ENCODE measurements at regions of chr2 and their contacts with region 1.

Region 1: DNA sequence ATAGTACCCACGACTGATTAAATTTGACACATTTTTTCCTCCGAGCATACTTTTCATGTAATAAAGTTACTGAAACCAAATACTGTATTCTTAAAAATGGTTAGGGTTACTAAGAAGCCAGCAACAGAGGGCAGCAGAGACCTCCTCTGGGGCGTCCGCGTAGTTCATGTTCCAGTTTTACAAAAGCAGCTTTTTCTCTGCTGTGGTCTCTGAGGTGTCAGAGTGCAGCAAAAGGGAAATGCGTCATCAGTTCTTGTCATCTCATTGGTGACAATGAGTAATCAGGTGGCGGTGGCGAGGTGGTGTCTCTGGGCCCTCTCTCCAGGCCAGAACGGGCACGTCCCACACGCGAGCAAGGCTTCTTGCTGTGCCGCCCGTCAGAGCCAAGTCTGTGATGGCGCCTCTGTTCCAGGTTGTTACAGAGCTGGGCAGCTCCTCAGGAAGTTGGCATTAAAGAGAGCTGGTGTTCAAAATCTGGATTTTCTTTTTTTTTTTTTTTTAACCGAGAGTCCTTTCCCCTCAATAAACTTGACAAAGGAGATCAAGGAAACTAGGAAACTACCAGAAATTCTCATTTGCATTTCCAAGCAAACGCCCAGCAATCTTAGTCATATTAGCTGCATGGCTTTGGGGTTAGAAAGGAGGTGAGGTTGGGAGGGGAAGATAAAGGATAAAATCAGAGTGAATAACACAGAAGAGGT is 98.6 kb upstream of the BZW1 start:
- DNase-seq: peak; percentile 84 to 98 (median 88)
- ATAC-seq: peak; percentile 96
- H3K4me3 ChIP-seq: peak overlapping the region; percentile 33
- H3K4me3 Mint-ChIP-seq: peak overlapping the region; percentile 77
- H3K27ac ChIP-seq: peak overlapping the region; percentile 81 to 95
- H3K27ac Mint-ChIP-seq: peak overlapping the region; percentile 99
- H3K4me1 ChIP-seq: peaks cover 9% of the 10 kb centered on the region
- H3K4me1 Mint-ChIP-seq: peaks cover 13% of the 10 kb centered on the region
- H3K27me3 ChIP-seq: no peaks in the 10 kb centered on the region
- H3K27me3 Mint-ChIP-seq: no peaks in the 10 kb centered on the region
- CTCF ChIP-seq: peak; percentile 89

Region 2: GRCh38 chr2:200509612-200510433 is 203.3 kb before region 1 on chr2 and contains the start of gene KCTD18:
- CTCF ChIA-PET with region 1: interaction called, 4 read pairs
- POLR2A ChIA-PET with region 1: interaction called, 3 read pairs
- intact Hi-C with region 1: loop called in 1 of 2 experiments (anchors 5 kb)
- DNase-seq: peak; percentile 81 to 94 (median 92)
- ATAC-seq: peak; percentile 99
- H3K4me3 ChIP-seq: peak within 1 kb of the TSS; percentile 84
- H3K4me3 Mint-ChIP-seq: peak within 1 kb of the TSS; percentile 95
- H3K27ac ChIP-seq: peak within 1 kb of the TSS; percentile 54
- H3K27ac Mint-ChIP-seq: peak within 1 kb of the TSS; percentile 91
- H3K4me1 ChIP-seq: peaks cover 27% of the 10 kb centered on the region
- H3K4me1 Mint-ChIP-seq: peaks cover 46% of the 10 kb centered on the region
- H3K27me3 ChIP-seq: no peaks in the 10 kb centered on the region
- H3K27me3 Mint-ChIP-seq: no peaks in the 10 kb centered on the region
- CTCF ChIP-seq: peak; percentile 72
- total RNA-seq, gene KCTD18: 18.9 to 19.8 TPM

Region 3: GRCh38 chr2:200735061-200735460 is 21.9 kb after region 1 on chr2:
- CTCF ChIA-PET with region 1: interaction called, 10 read pairs
- POLR2A ChIA-PET with region 1: interaction called, 6 read pairs
- intact Hi-C with region 1: loop called (anchors 1 to 2 kb)
- DNase-seq: peak in 1 of 14 experiments; percentile 10
- ATAC-seq: no peak
- H3K4me3 ChIP-seq: no peak overlapping the region
- H3K4me3 Mint-ChIP-seq: no peak overlapping the region
- H3K27ac ChIP-seq: no peak overlapping the region
- H3K27ac Mint-ChIP-seq: no peak overlapping the region
- H3K4me1 ChIP-seq: no peaks in the 10 kb centered on the region
- H3K4me1 Mint-ChIP-seq: no peaks in the 10 kb centered on the region
- H3K27me3 ChIP-seq: peaks cover 0 to 4% of the 10 kb centered on the region in 2 experiments
- H3K27me3 Mint-ChIP-seq: peaks cover 27% of the 10 kb centered on the region
- CTCF ChIP-seq: no peak

Region 4: GRCh38 chr2:200888704-200889625 is 175.8 kb after region 1 on chr2 and contains the starts of genes NIF3L1 and PPIL3:
- CTCF ChIA-PET with region 1: interaction called, 7 read pairs
- POLR2A ChIA-PET with region 1: interaction called, 27 read pairs
- intact Hi-C with region 1: loop called (anchors 2 kb)
- DNase-seq: peak; percentile 93 to 99 (median 95)
- ATAC-seq: peak; percentile 67
- H3K4me3 ChIP-seq: peak within 1 kb of the TSS; percentile 64
- H3K4me3 Mint-ChIP-seq: peak within 1 kb of the TSS; percentile 94
- H3K27ac ChIP-seq: peak within 1 kb of the TSS; percentile 92 to 94
- H3K27ac Mint-ChIP-seq: peak within 1 kb of the TSS; percentile 99
- H3K4me1 ChIP-seq: peaks cover 36% of the 10 kb centered on the region
- H3K4me1 Mint-ChIP-seq: peaks cover 42% of the 10 kb centered on the region
- H3K27me3 ChIP-seq: no peaks in the 10 kb centered on the region
- H3K27me3 Mint-ChIP-seq: no peaks in the 10 kb centered on the region
- CTCF ChIP-seq: no peak
- total RNA-seq, gene NIF3L1: 6.1 to 6.7 TPM
- total RNA-seq, gene PPIL3: 23.1 to 29.8 TPM

Region 5: GRCh38 chr2:200963124-200963917 is 250.2 kb after region 1 on chr2 and contains the start of gene ORC2:
- CTCF ChIA-PET with region 1: no interaction called
- POLR2A ChIA-PET with region 1: interaction called, 3 read pairs
- intact Hi-C with region 1: loop called in 1 of 2 experiments (anchors 10 kb)
- DNase-seq: peak; percentile 87 to 96 (median 90)
- ATAC-seq: peak; percentile 95
- H3K4me3 ChIP-seq: peak within 1 kb of the TSS; percentile 98
- H3K4me3 Mint-ChIP-seq: peak within 1 kb of the TSS; percentile 99
- H3K27ac ChIP-seq: peak within 1 kb of the TSS; percentile 89 to 92
- H3K27ac Mint-ChIP-seq: peak within 1 kb of the TSS; percentile 100
- H3K4me1 ChIP-seq: peaks cover 25% of the 10 kb centered on the region
- H3K4me1 Mint-ChIP-seq: peaks cover 73% of the 10 kb centered on the region
- H3K27me3 ChIP-seq: no peaks in the 10 kb centered on the region
- H3K27me3 Mint-ChIP-seq: no peaks in the 10 kb centered on the region
- CTCF ChIP-seq: peak; percentile 74
- total RNA-seq, gene ORC2: 25.0 to 26.6 TPM

Region 6: GRCh38 chr2:201171259-201171814 is 458.2 kb after region 1 on chr2:
- CTCF ChIA-PET with region 1: no interaction called
- POLR2A ChIA-PET with region 1: no interaction called
- intact Hi-C with region 1: loop called (anchors 5 kb)
- DNase-seq: no peak
- ATAC-seq: no peak
- H3K4me3 ChIP-seq: no peak overlapping the region
- H3K4me3 Mint-ChIP-seq: no peak overlapping the region
- H3K27ac ChIP-seq: no peak overlapping the region
- H3K27ac Mint-ChIP-seq: peak overlapping the region; percentile 51
- H3K4me1 ChIP-seq: no peaks in the 10 kb centered on the region
- H3K4me1 Mint-ChIP-seq: no peaks in the 10 kb centered on the region
- H3K27me3 ChIP-seq: no peaks in the 10 kb centered on the region
- H3K27me3 Mint-ChIP-seq: no peaks in the 10 kb centered on the region
- CTCF ChIP-seq: no peak

Region 7: GRCh38 chr2:202051499-202052161 is 1338.5 kb after region 1 on chr2:
- CTCF ChIA-PET with region 1: no interaction called
- POLR2A ChIA-PET with region 1: no interaction called
- intact Hi-C with region 1: no loop called
- DNase-seq: no peak
- ATAC-seq: no peak
- H3K4me3 ChIP-seq: no peak overlapping the region
- H3K4me3 Mint-ChIP-seq: no peak overlapping the region
- H3K27ac ChIP-seq: no peak overlapping the region
- H3K27ac Mint-ChIP-seq: no peak overlapping the region
- H3K4me1 ChIP-seq: no peaks in the 10 kb centered on the region
- H3K4me1 Mint-ChIP-seq: no peaks in the 10 kb centered on the region
- H3K27me3 ChIP-seq: peaks cover 9 to 26% of the 10 kb centered on the region in 2 experiments
- H3K27me3 Mint-ChIP-seq: peaks cover 61% of the 10 kb centered on the region
- CTCF ChIP-seq: no peak